BJ (cell line): ENCODE measurements at regions of chr5 and their contacts with region 1.

Region 1: GRCh38 chr5:95959051-95959887 is 2.4 kb downstream of the ELL2 start:
- DNase-seq: no peak
- H3K4me3 ChIP-seq: peak overlapping the region; percentile 73
- H3K27me3 ChIP-seq: no peaks in the 10 kb centered on the region
- CTCF ChIP-seq: no peak

Region 2: GRCh38 chr5:96079075-96079474 is 119.8 kb after region 1 on chr5:
- CTCF ChIA-PET with region 1: no interaction called
- POLR2A ChIA-PET with region 1: no interaction called
- DNase-seq: peak; percentile 83
- H3K4me3 ChIP-seq: no peak overlapping the region
- H3K27me3 ChIP-seq: no peaks in the 10 kb centered on the region
- CTCF ChIP-seq: no peak

Region 3: GRCh38 chr5:97019435-97020117 is 1060.3 kb after region 1 on chr5:
- CTCF ChIA-PET with region 1: no interaction called
- POLR2A ChIA-PET with region 1: interaction called, 11 read pairs
- DNase-seq: no peak
- H3K4me3 ChIP-seq: no peak overlapping the region
- H3K27me3 ChIP-seq: no peaks in the 10 kb centered on the region
- CTCF ChIP-seq: no peak